ENCODE measurements at regions of chr9 and their contacts with region 1.

Region 1: DNA sequence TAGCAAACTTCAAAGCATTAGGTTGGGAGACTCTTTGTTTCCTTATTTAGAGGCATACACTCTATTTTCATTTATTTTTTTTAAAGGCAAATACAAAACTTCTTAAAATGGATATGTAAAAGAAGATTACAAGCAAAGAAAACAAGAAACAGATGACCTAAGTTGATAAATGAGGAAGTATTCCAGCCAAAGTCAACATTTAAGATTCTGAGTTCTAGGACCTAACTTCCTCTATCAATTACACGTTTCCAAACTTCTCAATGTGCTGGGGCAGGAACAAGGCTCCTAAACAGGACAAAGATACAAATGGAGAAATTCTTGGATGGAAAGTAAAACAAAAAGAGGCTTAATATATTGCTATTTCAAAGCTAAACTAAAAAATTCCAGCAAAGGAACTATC is 89.5 kb downstream of the TLE1 start:
- DNase-seq: no peak
- ATAC-seq: no peak
- H3K4me3 ChIP-seq: no peak overlapping the region
- H3K4me3 Mint-ChIP-seq: no peak overlapping the region
- H3K27ac ChIP-seq: no peak overlapping the region
- H3K27ac Mint-ChIP-seq: no peak overlapping the region
- H3K4me1 ChIP-seq: no peaks in the 10 kb centered on the region
- H3K4me1 Mint-ChIP-seq: peaks cover 13 to 17% (median 15%) of the 10 kb centered on the region in 3 donors
- H3K27me3 ChIP-seq: no peaks in the 10 kb centered on the region
- H3K27me3 Mint-ChIP-seq: peaks cover 0 to 6% of the 10 kb centered on the region in 2 donors

Region 2: GRCh38 chr9:80188579-80188978 is 1411.3 kb before region 1 on chr9:
- CTCF ChIA-PET with region 1: no interaction called
- POLR2A ChIA-PET with region 1: interaction called in 1 of 2 experiments, 10 read pairs
- DNase-seq: no peak
- ATAC-seq: no peak
- H3K4me3 ChIP-seq: no peak overlapping the region
- H3K4me3 Mint-ChIP-seq: no peak overlapping the region
- H3K27ac ChIP-seq: no peak overlapping the region
- H3K27ac Mint-ChIP-seq: no peak overlapping the region
- H3K4me1 ChIP-seq: no peaks in the 10 kb centered on the region
- H3K4me1 Mint-ChIP-seq: no peaks in the 10 kb centered on the region
- H3K27me3 ChIP-seq: no peaks in the 10 kb centered on the region
- H3K27me3 Mint-ChIP-seq: no peaks in the 10 kb centered on the region

Region 3: DNA sequence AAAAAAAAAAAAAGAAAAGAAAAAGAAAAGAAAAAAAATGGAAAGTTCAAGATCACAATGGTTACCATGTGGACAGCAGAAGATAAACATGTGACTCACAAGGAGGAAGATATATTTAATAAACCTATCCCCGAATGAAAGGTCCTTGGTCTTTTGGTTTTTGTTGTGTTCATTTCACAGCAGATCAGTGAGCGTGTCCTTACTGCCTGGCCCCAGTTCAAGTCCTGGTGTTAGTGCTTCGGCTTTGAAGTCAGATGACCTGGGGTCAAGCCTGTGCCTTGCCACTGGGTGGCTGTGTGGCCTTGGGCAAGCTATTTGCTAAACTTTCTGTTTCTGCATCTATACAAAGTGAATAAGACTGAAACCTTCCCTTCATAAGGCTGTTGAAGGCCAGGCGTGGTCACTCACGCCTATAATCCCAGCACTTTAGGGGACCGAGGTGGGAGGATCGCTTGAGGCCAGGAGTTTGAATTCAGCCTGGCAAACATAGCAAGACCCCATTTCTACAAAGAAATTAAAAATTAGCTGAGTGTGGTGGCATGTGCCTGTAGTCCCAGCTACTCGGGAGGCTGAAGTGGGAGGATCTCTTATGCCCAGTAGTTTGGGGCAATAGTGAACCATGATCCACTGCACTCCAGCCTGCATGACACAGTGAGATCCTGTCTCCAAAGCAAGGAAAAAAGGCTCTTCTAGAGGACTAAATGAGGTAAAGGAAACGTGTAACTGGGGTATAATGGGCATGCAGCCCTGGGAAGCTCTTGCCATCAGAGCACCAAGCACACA is 233.9 kb after region 1 on chr9:
- CTCF ChIA-PET with region 1: no interaction called
- POLR2A ChIA-PET with region 1: interaction called in 1 of 2 experiments, 17 read pairs
- DNase-seq: no peak
- ATAC-seq: no peak
- H3K4me3 ChIP-seq: no peak overlapping the region
- H3K4me3 Mint-ChIP-seq: no peak overlapping the region
- H3K27ac ChIP-seq: no peak overlapping the region
- H3K27ac Mint-ChIP-seq: no peak overlapping the region
- H3K4me1 ChIP-seq: no peaks in the 10 kb centered on the region
- H3K4me1 Mint-ChIP-seq: no peaks in the 10 kb centered on the region
- H3K27me3 ChIP-seq: no peaks in the 10 kb centered on the region
- H3K27me3 Mint-ChIP-seq: no peaks in the 10 kb centered on the region

Measured in T-cell (primary cell).